ENCODE measurements at regions of chr5 and their contacts with region 1.

Region 1: DNA sequence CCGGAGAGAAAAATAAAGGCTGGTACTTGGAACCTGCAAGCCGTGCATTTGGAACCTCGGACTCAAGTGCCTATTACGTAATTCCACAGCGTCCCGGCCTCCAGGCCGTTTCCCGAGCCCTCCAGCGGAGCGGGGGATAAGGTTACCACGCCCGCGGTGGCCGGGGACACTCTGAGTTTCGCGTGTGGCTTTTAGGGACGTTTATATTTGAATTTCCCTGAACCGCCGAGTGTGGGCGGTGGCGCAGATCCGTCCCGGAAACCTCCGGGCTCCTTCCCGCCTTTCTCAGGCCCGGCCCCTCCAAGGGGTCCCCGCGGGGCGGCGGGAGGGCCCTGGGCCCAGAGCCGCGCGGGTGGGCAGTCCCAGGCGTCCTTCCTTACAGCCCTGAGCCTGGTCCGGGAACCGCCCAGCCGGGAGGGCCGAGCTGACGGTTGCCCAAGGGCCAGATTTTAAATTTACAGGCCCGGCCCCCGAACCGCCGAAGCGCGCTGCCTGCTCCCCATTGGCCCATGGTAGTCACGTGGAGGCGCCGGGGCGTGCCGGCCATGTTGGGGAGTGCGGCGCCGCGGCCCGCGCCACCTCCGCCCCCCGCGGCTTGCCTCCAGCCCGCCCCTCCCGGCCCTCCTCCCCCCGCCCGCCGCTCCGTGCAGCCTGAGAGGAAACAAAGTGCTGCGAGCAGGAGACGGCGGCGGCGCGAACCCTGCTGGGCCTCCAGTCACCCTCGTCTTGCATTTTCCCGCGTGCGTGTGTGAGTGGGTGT is at the start of gene LMNB1:
- DNase-seq: peak; percentile 89 to 96 (median 92)
- ATAC-seq: peak; percentile 68
- H3K4me3 ChIP-seq: peak within 1 kb of the TSS; percentile 87 to 97
- H3K4me3 Mint-ChIP-seq: peak within 1 kb of the TSS; percentile 94
- H3K27ac ChIP-seq: peak within 1 kb of the TSS; percentile 83 to 92
- H3K27ac Mint-ChIP-seq: peak within 1 kb of the TSS; percentile 96
- H3K4me1 ChIP-seq: peaks cover 28% of the 10 kb centered on the region
- H3K4me1 Mint-ChIP-seq: peaks cover 30% of the 10 kb centered on the region
- H3K27me3 ChIP-seq: no peaks in the 10 kb centered on the region
- H3K27me3 Mint-ChIP-seq: no peaks in the 10 kb centered on the region
- CTCF ChIP-seq: no peak
- total RNA-seq, gene LMNB1: 25.8 to 30.6 TPM

Region 2: GRCh38 chr5:126422989-126423788 is 353.5 kb before region 1 on chr5 and contains the start of gene GRAMD2B:
- CTCF ChIA-PET with region 1: no interaction called
- POLR2A ChIA-PET with region 1: no interaction called
- intact Hi-C with region 1: loop called (anchors 5 to 10 kb)
- DNase-seq: peak; percentile 34 to 90 (median 65)
- ATAC-seq: peak; percentile 93
- H3K4me3 ChIP-seq: peak within 1 kb of the TSS; percentile 78 to 84
- H3K4me3 Mint-ChIP-seq: peak within 1 kb of the TSS; percentile 91
- H3K27ac ChIP-seq: peak within 1 kb of the TSS; percentile 90 to 95
- H3K27ac Mint-ChIP-seq: peak within 1 kb of the TSS; percentile 95
- H3K4me1 ChIP-seq: peaks cover 21% of the 10 kb centered on the region
- H3K4me1 Mint-ChIP-seq: peaks cover 38% of the 10 kb centered on the region
- H3K27me3 ChIP-seq: no peaks in the 10 kb centered on the region
- H3K27me3 Mint-ChIP-seq: no peaks in the 10 kb centered on the region
- CTCF ChIP-seq: no peak
- total RNA-seq, gene GRAMD2B: 8.2 to 10.4 TPM

Region 3: GRCh38 chr5:126656396-126657007 is 120.2 kb before region 1 on chr5:
- CTCF ChIA-PET with region 1: interaction called, 25 read pairs
- POLR2A ChIA-PET with region 1: interaction called, 4 read pairs
- intact Hi-C with region 1: loop called (anchors 1 kb)
- DNase-seq: peak in 4 of 9 experiments; percentile 5 to 57 (median 30)
- ATAC-seq: no peak
- H3K4me3 ChIP-seq: no peak overlapping the region
- H3K4me3 Mint-ChIP-seq: no peak overlapping the region
- H3K27ac ChIP-seq: no peak overlapping the region
- H3K27ac Mint-ChIP-seq: no peak overlapping the region
- H3K4me1 ChIP-seq: no peaks in the 10 kb centered on the region
- H3K4me1 Mint-ChIP-seq: no peaks in the 10 kb centered on the region
- H3K27me3 ChIP-seq: no peaks in the 10 kb centered on the region
- H3K27me3 Mint-ChIP-seq: no peaks in the 10 kb centered on the region
- CTCF ChIP-seq: peak; percentile 83

Region 4: GRCh38 chr5:126757713-126758357 is 18.8 kb before region 1 on chr5:
- CTCF ChIA-PET with region 1: interaction called, 6 read pairs
- POLR2A ChIA-PET with region 1: interaction called, 12 read pairs
- intact Hi-C with region 1: no loop called
- DNase-seq: no peak
- ATAC-seq: no peak
- H3K4me3 ChIP-seq: no peak overlapping the region
- H3K4me3 Mint-ChIP-seq: peak overlapping the region; percentile 56
- H3K27ac ChIP-seq: no peak overlapping the region
- H3K27ac Mint-ChIP-seq: peak overlapping the region; percentile 4
- H3K4me1 ChIP-seq: peaks cover 7% of the 10 kb centered on the region
- H3K4me1 Mint-ChIP-seq: peaks cover 18% of the 10 kb centered on the region
- H3K27me3 ChIP-seq: no peaks in the 10 kb centered on the region
- H3K27me3 Mint-ChIP-seq: no peaks in the 10 kb centered on the region
- CTCF ChIP-seq: no peak

Region 5: GRCh38 chr5:126852091-126852571 is 75.5 kb after region 1 on chr5:
- CTCF ChIA-PET with region 1: interaction called, 15 read pairs
- POLR2A ChIA-PET with region 1: interaction called, 82 read pairs
- intact Hi-C with region 1: loop called (anchors 2 to 5 kb)
- DNase-seq: peak in 5 of 9 experiments; percentile 19 to 65 (median 48)
- ATAC-seq: peak; percentile 70
- H3K4me3 ChIP-seq: peak overlapping the region; percentile 1 to 47
- H3K4me3 Mint-ChIP-seq: peak overlapping the region; percentile 88
- H3K27ac ChIP-seq: peak overlapping the region; percentile 56 to 59
- H3K27ac Mint-ChIP-seq: peak overlapping the region; percentile 98
- H3K4me1 ChIP-seq: peaks cover 38% of the 10 kb centered on the region
- H3K4me1 Mint-ChIP-seq: peaks cover 70% of the 10 kb centered on the region
- H3K27me3 ChIP-seq: no peaks in the 10 kb centered on the region
- H3K27me3 Mint-ChIP-seq: no peaks in the 10 kb centered on the region
- CTCF ChIP-seq: no peak

Region 6: GRCh38 chr5:126909856-126910255 is 133.2 kb after region 1 on chr5:
- CTCF ChIA-PET with region 1: no interaction called
- POLR2A ChIA-PET with region 1: no interaction called
- intact Hi-C with region 1: no loop called
- DNase-seq: no peak
- ATAC-seq: no peak
- H3K4me3 ChIP-seq: no peak overlapping the region
- H3K4me3 Mint-ChIP-seq: no peak overlapping the region
- H3K27ac ChIP-seq: no peak overlapping the region
- H3K27ac Mint-ChIP-seq: no peak overlapping the region
- H3K4me1 ChIP-seq: no peaks in the 10 kb centered on the region
- H3K4me1 Mint-ChIP-seq: no peaks in the 10 kb centered on the region
- H3K27me3 ChIP-seq: no peaks in the 10 kb centered on the region
- H3K27me3 Mint-ChIP-seq: no peaks in the 10 kb centered on the region
- CTCF ChIP-seq: no peak

Region 7: DNA sequence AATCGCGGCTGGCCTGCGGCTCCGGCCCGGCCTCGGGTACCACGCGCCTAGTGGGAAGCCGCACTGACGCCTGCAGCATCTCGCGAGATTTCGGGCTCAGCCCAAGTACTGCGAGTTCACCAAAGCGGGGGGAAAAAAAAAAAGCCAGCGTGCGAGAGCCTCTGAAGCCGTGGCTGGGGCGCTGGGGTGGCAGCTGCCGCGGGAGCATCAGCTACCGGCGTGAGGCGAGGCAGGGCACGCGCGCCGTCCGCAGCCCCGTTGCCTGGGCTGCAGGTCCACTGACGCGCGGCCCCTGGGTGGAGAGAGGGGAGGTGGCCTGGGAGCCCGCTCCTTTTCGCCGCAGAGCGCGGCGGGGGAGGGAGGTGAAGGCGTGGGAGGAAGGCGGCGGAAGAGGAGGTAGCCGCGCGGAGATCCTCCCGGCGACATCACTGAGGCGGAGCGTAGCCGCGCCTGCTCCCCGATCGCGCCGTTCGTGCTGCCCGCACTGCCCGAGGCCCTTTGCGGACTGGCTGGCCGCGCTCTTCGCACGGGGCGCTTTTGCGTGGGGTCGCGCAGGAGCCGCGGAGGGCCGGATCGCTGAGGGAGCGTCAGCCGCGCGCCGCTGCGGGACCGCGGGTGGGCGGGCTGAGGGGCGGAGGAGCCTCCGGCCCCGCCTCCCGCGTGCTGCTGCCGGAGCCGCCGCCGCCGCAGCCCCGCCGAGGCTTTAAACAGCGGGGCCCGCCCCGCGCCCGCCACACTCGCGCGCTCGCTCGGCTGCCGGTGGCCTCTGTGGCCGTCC is 1306.5 kb after region 1 on chr5 and contains the start of gene SLC12A2:
- CTCF ChIA-PET with region 1: interaction called, 3 read pairs
- POLR2A ChIA-PET with region 1: no interaction called
- intact Hi-C with region 1: loop called (anchors 2 to 5 kb)
- DNase-seq: peak; percentile 81 to 98 (median 91)
- ATAC-seq: peak; percentile 69
- H3K4me3 ChIP-seq: peak within 1 kb of the TSS; percentile 73 to 86
- H3K4me3 Mint-ChIP-seq: peak within 1 kb of the TSS; percentile 93
- H3K27ac ChIP-seq: peak within 1 kb of the TSS; percentile 89 to 90
- H3K27ac Mint-ChIP-seq: peak within 1 kb of the TSS; percentile 95
- H3K4me1 ChIP-seq: peaks cover 48% of the 10 kb centered on the region
- H3K4me1 Mint-ChIP-seq: peaks cover 70% of the 10 kb centered on the region
- H3K27me3 ChIP-seq: no peaks in the 10 kb centered on the region
- H3K27me3 Mint-ChIP-seq: no peaks in the 10 kb centered on the region
- CTCF ChIP-seq: no peak
- total RNA-seq, gene SLC12A2: 12.6 to 12.8 TPM

Measured in CD8-positive, alpha-beta T cell (primary cell).